OCI-LY7 (cell line): ENCODE measurements at regions of chr2 and their contacts with region 1.

Region 1: DNA sequence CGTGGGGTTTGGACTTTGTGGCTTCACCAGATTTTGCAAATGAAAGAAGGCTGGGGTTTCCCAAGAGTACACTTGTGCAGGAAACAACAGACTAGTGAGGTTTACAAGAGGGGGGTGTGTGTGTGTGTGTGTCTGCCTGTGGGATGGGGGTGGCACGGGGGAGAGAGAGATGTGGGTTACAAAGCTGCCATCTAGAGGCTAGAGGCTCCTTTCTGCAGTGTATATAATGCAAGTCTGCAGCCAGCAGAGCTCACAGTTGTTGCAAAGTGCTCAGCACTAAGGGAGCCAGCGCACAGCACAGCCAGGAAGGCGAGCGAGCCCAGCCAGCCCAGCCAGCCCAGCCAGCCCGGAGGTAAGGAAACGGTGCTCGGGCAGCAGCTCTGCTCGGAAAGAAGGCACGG is at the start of gene ACKR3:
- DNase-seq: peak; percentile 94
- H3K4me3 ChIP-seq: peak within 1 kb of the TSS; percentile 71
- H3K27ac ChIP-seq: peak within 1 kb of the TSS; percentile 67
- H3K4me1 ChIP-seq: peaks cover 73% of the 10 kb centered on the region
- CTCF ChIP-seq: peak; percentile 87
- total RNA-seq, gene ACKR3: 1.5 and 2.1 TPM in 2 replicates

Region 2: GRCh38 chr2:236352761-236353593 is 216.6 kb before region 1 on chr2:
- CTCF ChIA-PET with region 1: no interaction called
- POLR2A ChIA-PET with region 1: interaction called, 3 read pairs
- intact Hi-C with region 1: loop called (anchors 2 kb)
- DNase-seq: peak; percentile 64
- H3K4me3 ChIP-seq: no peak overlapping the region
- H3K27ac ChIP-seq: no peak overlapping the region
- H3K4me1 ChIP-seq: no peaks in the 10 kb centered on the region
- CTCF ChIP-seq: peak; percentile 99

Region 3: GRCh38 chr2:236512902-236513435 is 56.6 kb before region 1 on chr2:
- CTCF ChIA-PET with region 1: interaction called, 45 read pairs
- POLR2A ChIA-PET with region 1: interaction called, 28 read pairs
- intact Hi-C with region 1: loop called (anchors 1 kb)
- DNase-seq: peak; percentile 86
- H3K4me3 ChIP-seq: no peak overlapping the region
- H3K27ac ChIP-seq: no peak overlapping the region
- H3K4me1 ChIP-seq: peaks cover 12% of the 10 kb centered on the region
- CTCF ChIP-seq: peak; percentile 95

Region 4: GRCh38 chr2:236545814-236546480 is 23.6 kb before region 1 on chr2:
- CTCF ChIA-PET with region 1: no interaction called
- POLR2A ChIA-PET with region 1: interaction called, 8 read pairs
- intact Hi-C with region 1: loop called (anchors 1 kb)
- DNase-seq: peak; percentile 82
- H3K4me3 ChIP-seq: peak overlapping the region; percentile 48
- H3K27ac ChIP-seq: peak overlapping the region; percentile 94
- H3K4me1 ChIP-seq: peaks cover 50% of the 10 kb centered on the region
- CTCF ChIP-seq: no peak

Region 5: GRCh38 chr2:236607451-236608187 is 38.0 kb after region 1 on chr2:
- CTCF ChIA-PET with region 1: no interaction called
- POLR2A ChIA-PET with region 1: no interaction called
- intact Hi-C with region 1: no loop called
- DNase-seq: peak; percentile 20
- H3K4me3 ChIP-seq: no peak overlapping the region
- H3K27ac ChIP-seq: no peak overlapping the region
- H3K4me1 ChIP-seq: no peaks in the 10 kb centered on the region
- CTCF ChIP-seq: peak; percentile 47

Region 6: DNA sequence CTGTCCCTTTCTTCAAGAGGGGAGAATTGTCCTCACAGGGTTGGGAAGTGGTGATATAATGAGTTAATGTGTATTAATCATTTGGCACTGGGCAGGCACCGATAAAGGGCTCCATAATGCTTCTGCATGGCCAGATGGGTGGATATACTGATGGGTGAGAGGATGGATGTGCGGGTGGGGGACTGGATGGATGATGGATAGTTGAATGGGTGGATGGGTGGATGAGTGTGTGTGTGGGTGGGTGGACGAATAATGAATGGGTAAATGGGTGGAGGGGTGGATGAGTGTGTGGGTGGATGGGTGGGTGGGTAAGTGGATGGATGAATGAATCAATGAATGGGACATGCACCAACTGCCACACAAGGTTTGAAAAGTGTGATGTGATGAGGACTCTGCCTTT is 127.3 kb after region 1 on chr2:
- CTCF ChIA-PET with region 1: no interaction called
- POLR2A ChIA-PET with region 1: no interaction called
- intact Hi-C with region 1: no loop called
- DNase-seq: no peak
- H3K4me3 ChIP-seq: no peak overlapping the region
- H3K27ac ChIP-seq: no peak overlapping the region
- H3K4me1 ChIP-seq: no peaks in the 10 kb centered on the region
- CTCF ChIP-seq: no peak